Activated CD8-positive, alpha-beta memory T cell treated with anti-CD3 and anti-CD28 coated beads, Interleukin-2, amount 10 ng/mL, durations not matched to agents 7 days and 5 days (primary cell): ENCODE measurements at regions of chr12 and their contacts with region 1.

Region 1: GRCh38 chr12:131104463-131105350 is 151.0 kb downstream of the ADGRD1 start:
- DNase-seq: peak; percentile 85
- ATAC-seq: peak; percentile 89
- H3K4me3 Mint-ChIP-seq: no peak overlapping the region
- H3K27ac Mint-ChIP-seq: no peak overlapping the region
- H3K4me1 Mint-ChIP-seq: peaks cover 18% of the 10 kb centered on the region
- H3K27me3 Mint-ChIP-seq: peaks cover 8% of the 10 kb centered on the region

Region 2: GRCh38 chr12:131092901-131093603 is 11.7 kb before region 1 on chr12:
- CTCF ChIA-PET with region 1: interaction called, 16 read pairs
- DNase-seq: peak; percentile 75
- ATAC-seq: peak; percentile 68
- H3K4me3 Mint-ChIP-seq: no peak overlapping the region
- H3K27ac Mint-ChIP-seq: peak overlapping the region; percentile 41
- H3K4me1 Mint-ChIP-seq: peaks cover 29% of the 10 kb centered on the region
- H3K27me3 Mint-ChIP-seq: no peaks in the 10 kb centered on the region

Region 3: DNA sequence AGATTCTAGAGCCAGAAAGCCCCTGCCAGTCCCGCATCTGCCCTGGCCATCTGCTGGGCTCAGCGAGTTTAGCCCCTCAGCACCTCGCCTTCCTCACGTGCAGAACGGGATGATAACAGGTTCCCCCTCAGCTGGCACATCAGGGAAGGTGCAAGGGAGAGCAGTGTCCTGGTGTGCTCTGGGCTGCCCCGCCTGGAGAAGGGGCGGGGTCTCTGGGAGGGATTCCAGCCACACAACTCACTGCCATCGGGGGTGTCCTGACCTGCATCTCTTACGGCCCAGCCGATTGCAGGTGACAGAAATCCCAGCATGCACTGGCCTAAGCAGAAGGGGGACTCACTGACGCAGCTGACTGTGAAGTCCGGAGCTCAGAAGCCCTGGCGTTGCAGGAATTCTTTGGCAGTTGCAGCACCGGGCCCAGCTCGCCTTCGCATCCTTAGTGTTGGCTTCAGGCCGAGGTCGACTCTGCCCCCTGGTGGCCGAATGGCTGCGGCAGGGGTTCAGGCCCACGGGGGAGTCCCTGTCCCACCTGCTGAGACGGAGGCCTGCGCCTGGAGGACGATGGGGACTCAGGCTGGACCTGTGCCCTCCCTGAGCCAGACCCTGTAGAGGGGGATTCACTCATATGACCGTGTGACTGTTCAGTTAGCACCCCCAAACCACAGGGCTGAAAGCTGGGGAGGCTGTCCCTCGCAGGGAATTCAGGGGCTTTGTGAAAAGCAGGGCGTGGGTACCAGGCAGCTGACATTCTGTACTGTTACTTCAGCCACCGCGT is 27.6 kb after region 1 on chr12:
- CTCF ChIA-PET with region 1: interaction called, 98 read pairs
- DNase-seq: peak; percentile 73
- ATAC-seq: peak; percentile 65
- H3K4me3 Mint-ChIP-seq: no peak overlapping the region
- H3K27ac Mint-ChIP-seq: no peak overlapping the region
- H3K4me1 Mint-ChIP-seq: no peaks in the 10 kb centered on the region
- H3K27me3 Mint-ChIP-seq: no peaks in the 10 kb centered on the region